ENCODE measurements at regions of chr4 and their contacts with region 1.

Region 1: GRCh38 chr4:48546336-48546735 is 56.3 kb downstream of the ZAR1 start:
- DNase-seq: no peak
- CTCF ChIP-seq: peak; percentile 52

Region 2: GRCh38 chr4:48127682-48128394 is 418.5 kb before region 1 on chr4:
- in situ Hi-C with region 1: loop called (anchors 25 kb)
- DNase-seq: peak; percentile 66
- CTCF ChIP-seq: peak; percentile 56

Region 3: DNA sequence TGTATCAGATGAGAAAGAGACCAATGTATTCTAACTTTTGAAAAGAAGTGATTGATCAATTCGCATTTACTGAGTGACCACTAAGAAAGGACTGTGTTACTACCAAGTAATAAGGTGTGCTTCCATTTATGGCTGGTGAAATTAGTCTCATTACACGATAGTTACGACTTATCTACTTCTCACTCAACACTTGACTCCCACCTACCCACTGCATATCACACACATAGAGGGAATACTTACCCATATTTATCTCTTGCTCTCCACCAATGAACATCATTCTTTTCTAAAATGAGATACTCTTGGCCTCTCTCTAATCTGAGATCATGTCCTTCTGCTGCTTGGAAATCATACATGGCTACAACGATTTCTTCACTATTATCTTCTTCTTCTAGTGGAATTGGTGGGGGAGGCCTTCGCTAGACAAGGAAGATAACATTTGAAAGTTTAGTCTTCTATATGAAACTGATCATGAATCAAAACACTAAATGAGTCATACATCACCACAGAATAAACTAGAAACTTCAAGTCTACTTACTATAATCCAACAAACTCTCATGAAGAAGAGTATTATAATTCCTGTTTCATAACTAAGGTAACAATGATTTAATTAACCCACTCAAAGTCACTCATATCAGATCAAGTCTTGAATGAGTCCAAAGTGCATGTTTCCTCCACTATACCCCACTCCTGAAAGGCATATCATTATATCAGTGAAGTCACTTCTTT is 378.6 kb before region 1 on chr4:
- in situ Hi-C with region 1: no loop called
- DNase-seq: no peak
- CTCF ChIP-seq: no peak

Region 4: GRCh38 chr4:48315728-48316630 is 230.4 kb before region 1 on chr4:
- in situ Hi-C with region 1: loop called (anchors 25 kb)
- DNase-seq: peak; percentile 63
- CTCF ChIP-seq: peak; percentile 45

Region 5: GRCh38 chr4:48681856-48682255 is 135.5 kb after region 1 on chr4:
- in situ Hi-C with region 1: no loop called
- DNase-seq: peak; percentile 36
- CTCF ChIP-seq: peak; percentile 36

Region 6: GRCh38 chr4:48909697-48910096 is 363.4 kb after region 1 on chr4:
- in situ Hi-C with region 1: no loop called
- DNase-seq: no peak
- CTCF ChIP-seq: no peak

Measured in GM13976 (cell line).